Sigmoid colon (tissue), 7 donors: ENCODE measurements at regions of chr5 and their contacts with region 1.

Region 1: GRCh38 chr5:132866342-132867045 is at the starts of genes GDF9 and UQCRQ:
- DNase-seq: peak; percentile 98
- H3K4me3 ChIP-seq: peak within 1 kb of the TSS; percentile 68 to 80 (median 78)
- H3K27ac ChIP-seq: peak within 1 kb of the TSS; percentile 90 to 93 (median 92)
- H3K4me1 ChIP-seq: peaks cover 0 to 22% (median 20%) of the 10 kb centered on the region in 4 donors
- H3K27me3 ChIP-seq: no peaks in the 10 kb centered on the region
- CTCF ChIP-seq: no peak
- EP300 ChIP-seq: peak in 1 of 4 donors; percentile 60
- POLR2A ChIP-seq: peak; percentile 92 to 95
- total RNA-seq, gene GDF9: 0.33 to 1.8 (median 0.55) TPM in 3 of 4 donors, not detected in the other
- total RNA-seq, gene UQCRQ: 113 to 230 (median 172) TPM

Region 2: GRCh38 chr5:132556763-132557477 is 309.6 kb before region 1 on chr5 and contains the start of gene RAD50:
- intact Hi-C with region 1: loop called (anchors 5 kb)
- DNase-seq: peak; percentile 97
- H3K4me3 ChIP-seq: peak within 1 kb of the TSS; percentile 51 to 80 (median 75)
- H3K27ac ChIP-seq: peak within 1 kb of the TSS; percentile 89 to 92 (median 91)
- H3K4me1 ChIP-seq: peaks cover 0 to 21% (median 19%) of the 10 kb centered on the region in 4 donors
- H3K27me3 ChIP-seq: no peaks in the 10 kb centered on the region
- CTCF ChIP-seq: no peak
- EP300 ChIP-seq: peak in 1 of 4 donors; percentile 78
- POLR2A ChIP-seq: peak; percentile 70 to 77
- total RNA-seq, gene RAD50: 20.0 to 34.6 (median 29.3) TPM

Region 3: GRCh38 chr5:132714456-132715307 is 151.8 kb before region 1 on chr5:
- intact Hi-C with region 1: no loop called
- DNase-seq: no peak
- H3K4me3 ChIP-seq: no peak overlapping the region
- H3K27ac ChIP-seq: no peak overlapping the region
- H3K4me1 ChIP-seq: peaks cover 0 to 3% (median 0%) of the 10 kb centered on the region in 4 donors
- H3K27me3 ChIP-seq: no peaks in the 10 kb centered on the region
- CTCF ChIP-seq: peak in 2 of 4 experiments; percentile 26 to 27
- EP300 ChIP-seq: no peak
- POLR2A ChIP-seq: no peak

Region 4: GRCh38 chr5:132829742-132830435 is 36.6 kb before region 1 on chr5:
- intact Hi-C with region 1: loop called (anchors 2 kb)
- DNase-seq: peak; percentile 85
- H3K4me3 ChIP-seq: peak overlapping the region; percentile 39 to 76 (median 60)
- H3K27ac ChIP-seq: peak overlapping the region; percentile 66 to 81 (median 74)
- H3K4me1 ChIP-seq: peaks cover 0 to 13% (median 11%) of the 10 kb centered on the region in 4 donors
- H3K27me3 ChIP-seq: peaks cover 0 to 16% (median 12%) of the 10 kb centered on the region in 3 donors
- CTCF ChIP-seq: peak; percentile 69 to 93 (median 82)
- EP300 ChIP-seq: no peak
- POLR2A ChIP-seq: no peak

Region 5: GRCh38 chr5:132963175-132964104 is 96.9 kb after region 1 on chr5 and contains the start of gene AFF4:
- intact Hi-C with region 1: loop called (anchors 2 kb)
- DNase-seq: peak; percentile 98
- H3K4me3 ChIP-seq: peak within 1 kb of the TSS; percentile 82 to 100 (median 100)
- H3K27ac ChIP-seq: peak within 1 kb of the TSS; percentile 95 to 100 (median 100)
- H3K4me1 ChIP-seq: peaks cover 0 to 41% (median 27%) of the 10 kb centered on the region in 4 donors
- H3K27me3 ChIP-seq: no peaks in the 10 kb centered on the region
- CTCF ChIP-seq: no peak
- EP300 ChIP-seq: peak in 2 of 4 donors; percentile 71 to 73
- POLR2A ChIP-seq: peak; percentile 95 to 96
- total RNA-seq, gene AFF4: 52.4 to 74.0 (median 66.7) TPM

Region 6: GRCh38 chr5:133032852-133033742 is 166.6 kb after region 1 on chr5:
- intact Hi-C with region 1: no loop called
- DNase-seq: no peak
- H3K4me3 ChIP-seq: no peak overlapping the region
- H3K27ac ChIP-seq: no peak overlapping the region
- H3K4me1 ChIP-seq: no peaks in the 10 kb centered on the region
- H3K27me3 ChIP-seq: no peaks in the 10 kb centered on the region
- CTCF ChIP-seq: no peak
- EP300 ChIP-seq: no peak
- POLR2A ChIP-seq: no peak

Region 7: DNA sequence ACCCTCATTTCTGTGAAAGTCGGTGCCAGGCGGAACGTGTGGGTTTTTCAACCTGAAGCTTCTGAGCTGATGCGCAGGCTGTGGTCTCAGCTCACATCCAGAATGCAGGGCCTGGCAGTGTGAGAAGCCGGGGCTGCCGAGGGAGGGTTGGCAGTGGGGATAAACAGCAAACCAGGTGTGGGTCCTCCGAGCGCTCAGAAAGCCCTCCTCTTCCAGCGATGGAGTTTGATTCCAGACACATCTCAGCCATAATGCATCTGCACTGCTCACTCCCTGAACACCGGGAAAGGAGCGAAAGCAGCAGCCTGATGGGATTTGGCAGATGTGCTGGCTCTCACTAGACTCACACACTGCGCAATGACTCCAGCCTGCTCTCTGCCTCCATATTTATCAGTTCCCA is 465.4 kb after region 1 on chr5:
- intact Hi-C with region 1: no loop called
- DNase-seq: peak; percentile 18
- H3K4me3 ChIP-seq: no peak overlapping the region
- H3K27ac ChIP-seq: no peak overlapping the region
- H3K4me1 ChIP-seq: no peaks in the 10 kb centered on the region
- H3K27me3 ChIP-seq: no peaks in the 10 kb centered on the region
- CTCF ChIP-seq: no peak
- EP300 ChIP-seq: no peak
- POLR2A ChIP-seq: no peak